A549 (cell line): ENCODE measurements at regions of chr12 and their contacts with region 1.

Region 1: GRCh38 chr12:95633049-95633545 is 81.8 kb upstream of the USP44 start:
- DNase-seq: peak; percentile 92 to 99
- ATAC-seq: peak; percentile 94 to 98
- H3K4me3 ChIP-seq: no peak overlapping the region
- H3K27ac ChIP-seq: peak overlapping the region; percentile 91 to 93
- H3K4me1 ChIP-seq: peaks cover 41% of the 10 kb centered on the region
- CTCF ChIP-seq: no peak
- EP300 ChIP-seq: peak; percentile 84 to 89; a peak in 3 of 5 replicates
- POLR2A ChIP-seq: no peak
- RAD21 ChIP-seq: peak; percentile 32 to 48; a peak in 4 of 5 replicates

Region 2: DNA sequence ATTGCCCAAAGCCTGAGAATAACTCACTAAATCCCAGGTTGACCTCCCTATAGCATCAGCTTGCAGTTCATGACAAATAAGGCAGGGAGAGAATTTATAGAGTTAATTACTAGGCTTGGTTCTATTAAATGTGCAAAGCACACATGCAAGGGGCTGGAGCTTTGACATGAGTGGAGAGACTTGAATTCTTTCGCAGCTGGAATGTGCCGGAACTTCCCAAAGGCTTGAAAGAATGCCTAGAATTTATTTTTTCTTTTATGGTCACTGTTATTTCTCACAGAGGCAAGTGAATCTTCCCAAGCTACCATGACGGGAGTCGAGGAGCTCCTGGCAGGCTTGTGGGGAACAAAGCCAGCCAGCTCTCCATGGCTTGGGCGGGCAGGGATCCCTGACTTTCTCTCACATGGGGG is 13.7 kb after region 1 on chr12:
- CTCF ChIA-PET with region 1: interaction called, 14 read pairs
- POLR2A ChIA-PET with region 1: interaction called, 4 read pairs
- DNase-seq: no peak
- ATAC-seq: no peak
- H3K4me3 ChIP-seq: no peak overlapping the region
- H3K27ac ChIP-seq: peak overlapping the region; percentile 18 to 89; a peak in 5 of 6 replicates
- H3K4me1 ChIP-seq: peaks cover 41% of the 10 kb centered on the region
- CTCF ChIP-seq: no peak
- EP300 ChIP-seq: no peak
- POLR2A ChIP-seq: no peak
- RAD21 ChIP-seq: no peak

Region 3: GRCh38 chr12:95733141-95733825 is 100.2 kb after region 1 on chr12:
- CTCF ChIA-PET with region 1: no interaction called
- POLR2A ChIA-PET with region 1: no interaction called
- DNase-seq: peak in 1 of 2 experiments; percentile 37
- ATAC-seq: peak in 1 of 2 experiments; percentile 49; a peak in 3 of 6 replicates
- H3K4me3 ChIP-seq: no peak overlapping the region
- H3K27ac ChIP-seq: peak overlapping the region in 1 of 2 experiments; percentile 18; a peak in 1 of 6 replicates
- H3K4me1 ChIP-seq: peaks cover 6% of the 10 kb centered on the region; the same call in 2 of the 3 replicates
- CTCF ChIP-seq: no peak
- EP300 ChIP-seq: no peak
- POLR2A ChIP-seq: no peak
- RAD21 ChIP-seq: no peak